Gastrocnemius medialis (tissue), 4 donors: ENCODE measurements at regions of chr4 and their contacts with region 1.

Region 1: DNA sequence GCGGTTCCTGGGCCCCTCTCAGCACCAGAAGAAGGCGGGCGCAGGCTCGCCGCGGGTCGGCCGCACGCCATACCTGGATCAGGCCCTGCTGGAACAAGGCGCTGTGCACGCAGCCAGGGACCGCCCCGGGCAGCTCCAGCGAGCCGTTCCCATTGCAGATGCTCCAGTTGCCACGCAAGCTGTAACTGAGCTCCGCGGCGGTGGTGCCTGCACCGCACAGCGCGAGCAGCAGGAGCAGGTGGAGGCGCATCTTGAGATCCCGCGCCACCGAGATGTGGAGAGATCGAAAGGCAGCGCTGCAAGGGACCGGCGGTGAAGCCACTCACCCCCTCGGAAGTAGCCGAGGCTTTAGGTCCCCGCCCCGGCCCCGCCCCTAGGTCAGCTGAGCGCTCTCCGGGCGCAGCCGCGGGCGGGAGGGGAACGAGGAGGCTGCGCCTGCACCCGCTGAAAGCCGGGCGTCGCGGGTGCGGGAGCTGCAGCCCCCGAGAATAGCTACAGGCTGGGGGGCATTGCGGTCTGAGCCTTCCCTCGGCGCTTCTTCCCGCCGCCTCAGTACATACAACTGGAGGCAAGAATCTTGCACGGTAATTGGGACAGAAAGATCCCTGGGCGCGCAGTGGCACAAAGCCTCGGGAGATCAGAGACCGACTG is at the start of gene MANBA:
- DNase-seq: peak; percentile 72 to 74
- ATAC-seq: peak; percentile 93 to 94
- H3K4me3 ChIP-seq: peak within 1 kb of the TSS; percentile 78 to 99 (median 83)
- H3K27ac ChIP-seq: peak within 1 kb of the TSS; percentile 83 to 89 (median 84)
- H3K4me1 ChIP-seq: peaks cover 5 to 19% of the 10 kb centered on the region in 2 donors
- H3K27me3 ChIP-seq: no peaks in the 10 kb centered on the region
- CTCF ChIP-seq: peak in 2 of 5 experiments; percentile 12 to 37
- POLR2A ChIP-seq: peak; percentile 65 to 71
- total RNA-seq, gene MANBA: 8.9 to 15.5 (median 12.6) TPM

Region 2: GRCh38 chr4:102620697-102621497 is 139.9 kb before region 1 on chr4:
- in situ Hi-C with region 1: no loop called
- intact Hi-C with region 1: loop called (anchors 5 kb)
- DNase-seq: peak in 1 of 2 donors; percentile 28
- ATAC-seq: peak; percentile 97 to 100
- H3K4me3 ChIP-seq: no peak overlapping the region
- H3K27ac ChIP-seq: peak overlapping the region in 3 of 4 donors; percentile 8 to 47 (median 16)
- H3K4me1 ChIP-seq: peaks cover 0 to 4% of the 10 kb centered on the region in 2 donors
- H3K27me3 ChIP-seq: no peaks in the 10 kb centered on the region
- CTCF ChIP-seq: peak; percentile 38 to 66 (median 55)
- POLR2A ChIP-seq: no peak

Region 3: GRCh38 chr4:102696758-102697157 is 64.0 kb before region 1 on chr4:
- in situ Hi-C with region 1: no loop called
- intact Hi-C with region 1: no loop called
- DNase-seq: no peak
- ATAC-seq: no peak
- H3K4me3 ChIP-seq: no peak overlapping the region
- H3K27ac ChIP-seq: no peak overlapping the region
- H3K4me1 ChIP-seq: peaks cover 5% of the 10 kb centered on the region in 2 donors
- H3K27me3 ChIP-seq: no peaks in the 10 kb centered on the region
- CTCF ChIP-seq: no peak
- POLR2A ChIP-seq: no peak

Region 4: GRCh38 chr4:102792361-102792936 is 31.7 kb after region 1 on chr4:
- in situ Hi-C with region 1: no loop called
- intact Hi-C with region 1: loop called (anchors 2 kb)
- DNase-seq: no peak
- ATAC-seq: no peak
- H3K4me3 ChIP-seq: no peak overlapping the region
- H3K27ac ChIP-seq: no peak overlapping the region
- H3K4me1 ChIP-seq: peaks cover 0 to 8% of the 10 kb centered on the region in 2 donors
- H3K27me3 ChIP-seq: no peaks in the 10 kb centered on the region
- CTCF ChIP-seq: no peak
- POLR2A ChIP-seq: no peak